ENCODE measurements at regions of chr5 and their contacts with region 1.

Region 1: DNA sequence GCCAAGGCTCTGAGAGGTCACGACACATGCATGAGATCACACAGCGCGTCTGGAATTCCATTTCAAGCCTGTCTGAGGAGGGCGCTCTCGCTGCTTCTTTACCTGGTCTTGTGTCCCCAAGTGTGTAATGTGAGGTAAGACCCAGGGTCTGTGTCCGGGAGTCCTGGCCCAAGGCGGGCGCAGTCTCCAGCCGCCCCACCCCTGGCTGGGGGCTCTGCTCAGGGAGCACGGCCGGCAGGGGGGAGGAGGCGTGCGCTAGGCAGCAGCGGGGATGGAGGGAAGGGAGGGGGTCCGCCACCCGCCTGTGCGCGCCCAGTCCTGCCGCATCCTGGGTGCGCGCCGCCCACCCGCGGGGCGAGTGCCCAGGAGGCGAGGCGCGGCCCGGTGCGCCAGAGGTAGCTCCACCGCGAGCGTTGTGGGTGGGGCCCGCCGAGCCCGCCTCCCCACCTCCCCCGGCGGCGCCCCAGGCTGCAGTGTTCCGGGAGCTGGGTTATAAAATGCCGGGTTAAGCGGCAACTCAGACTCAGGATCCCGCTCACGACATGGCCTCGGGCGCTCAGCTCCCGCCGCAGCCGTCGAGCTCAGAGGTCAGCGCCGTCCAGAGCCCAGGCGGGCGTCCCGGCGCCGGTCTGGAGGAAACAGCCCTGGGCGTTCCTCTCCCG is at the start of gene CCNI2:
- DNase-seq: peak; percentile 73
- ATAC-seq: peak; percentile 87
- H3K4me3 Mint-ChIP-seq: peak within 1 kb of the TSS; percentile 76
- H3K27ac Mint-ChIP-seq: peak within 1 kb of the TSS; percentile 70
- H3K4me1 Mint-ChIP-seq: peaks cover 45% of the 10 kb centered on the region
- H3K27me3 Mint-ChIP-seq: peaks cover 10% of the 10 kb centered on the region
- total RNA-seq, gene CCNI2: 16.7 to 52.5 TPM

Region 2: DNA sequence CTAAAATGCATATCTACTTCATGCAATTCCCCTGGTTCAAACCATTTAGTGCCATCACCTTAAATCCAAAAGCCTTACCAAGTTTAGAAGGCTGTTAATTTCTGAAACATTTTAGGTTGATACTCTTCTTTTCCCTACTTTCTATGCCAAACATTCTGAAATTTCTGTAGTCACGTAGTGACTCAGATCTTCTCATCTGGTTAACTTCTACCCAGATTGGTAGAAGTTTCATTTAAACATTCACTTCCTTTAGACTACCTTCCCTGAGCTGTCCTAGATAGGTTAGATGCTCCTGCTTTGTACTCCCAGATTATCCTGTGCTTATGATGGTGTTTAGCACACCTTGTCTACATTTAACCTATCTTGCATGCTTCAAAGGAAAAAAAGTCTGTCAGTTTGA is 180.4 kb before region 1 on chr5:
- CTCF ChIA-PET with region 1: no interaction called
- DNase-seq: no peak
- ATAC-seq: no peak
- H3K4me3 Mint-ChIP-seq: no peak overlapping the region
- H3K27ac Mint-ChIP-seq: no peak overlapping the region
- H3K4me1 Mint-ChIP-seq: peaks cover 40% of the 10 kb centered on the region
- H3K27me3 Mint-ChIP-seq: no peaks in the 10 kb centered on the region

Region 3: GRCh38 chr5:132714456-132715307 is 32.4 kb before region 1 on chr5:
- CTCF ChIA-PET with region 1: interaction called, 10 read pairs
- DNase-seq: no peak
- ATAC-seq: peak; percentile 70
- H3K4me3 Mint-ChIP-seq: peak overlapping the region; percentile 3
- H3K27ac Mint-ChIP-seq: peak overlapping the region; percentile 62
- H3K4me1 Mint-ChIP-seq: peaks cover 22% of the 10 kb centered on the region
- H3K27me3 Mint-ChIP-seq: no peaks in the 10 kb centered on the region